Cardiac septum (tissue), 1 donor: ENCODE measurements at regions of chr6 and their contacts with region 1.

Region 1: GRCh38 chr6:119313937-119314884 is 35.4 kb downstream of the MAN1A1 start:
- DNase-seq: no peak

Region 2: GRCh38 chr6:118387764-118388701 is 926.2 kb before region 1 on chr6:
- intact Hi-C with region 1: no loop called
- DNase-seq: no peak

Region 3: DNA sequence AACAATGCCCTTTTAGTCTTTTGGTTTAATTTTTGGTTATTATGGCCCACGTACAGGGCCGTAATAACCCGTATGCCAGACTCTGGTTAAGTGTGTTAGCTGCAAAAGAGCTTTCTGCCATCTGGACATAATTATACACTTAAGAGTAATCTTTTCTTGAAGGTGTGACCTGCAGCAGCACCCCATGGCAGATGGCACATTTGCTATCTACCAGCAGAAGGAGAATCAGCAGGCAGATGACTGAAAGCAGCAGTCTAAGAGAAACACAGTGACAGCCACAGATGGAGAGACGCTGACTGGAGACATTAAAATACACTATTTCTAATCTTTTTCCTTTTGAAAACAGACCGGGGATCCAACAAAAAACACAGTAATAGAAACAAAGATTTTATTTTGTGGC is 401.6 kb before region 1 on chr6:
- intact Hi-C with region 1: no loop called
- DNase-seq: no peak

Region 4: GRCh38 chr6:119267126-119267905 is 46.9 kb before region 1 on chr6:
- intact Hi-C with region 1: no loop called
- DNase-seq: no peak

Region 5: DNA sequence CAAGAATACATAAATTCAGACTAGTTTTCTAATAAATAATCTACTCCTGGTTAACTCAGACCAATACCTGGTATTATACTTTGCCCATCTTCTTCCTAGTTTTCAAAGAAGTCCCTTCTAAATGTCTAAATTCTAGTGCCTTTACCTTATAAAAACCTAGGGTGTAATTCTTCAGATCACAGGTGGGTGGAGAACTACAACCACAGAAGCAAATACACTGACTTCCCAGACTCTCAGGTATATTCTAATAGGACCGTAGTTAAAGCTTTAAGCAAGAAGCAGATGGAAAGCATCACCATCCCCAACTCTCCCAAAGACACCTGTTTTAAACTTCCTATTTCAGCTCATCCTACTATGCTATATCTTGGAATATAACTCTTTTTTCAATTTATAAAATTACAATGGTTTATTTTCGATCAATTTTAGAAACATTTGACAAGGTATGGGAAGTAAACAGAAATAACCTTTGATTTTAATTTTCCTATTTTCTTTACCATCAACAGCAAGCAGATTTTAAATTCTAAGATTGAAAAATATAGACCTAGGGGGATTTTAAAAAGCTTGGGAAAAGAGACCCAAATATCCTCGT is 19.6 kb after region 1 on chr6:
- intact Hi-C with region 1: loop called (anchors 2 kb)
- DNase-seq: no peak

Region 6: DNA sequence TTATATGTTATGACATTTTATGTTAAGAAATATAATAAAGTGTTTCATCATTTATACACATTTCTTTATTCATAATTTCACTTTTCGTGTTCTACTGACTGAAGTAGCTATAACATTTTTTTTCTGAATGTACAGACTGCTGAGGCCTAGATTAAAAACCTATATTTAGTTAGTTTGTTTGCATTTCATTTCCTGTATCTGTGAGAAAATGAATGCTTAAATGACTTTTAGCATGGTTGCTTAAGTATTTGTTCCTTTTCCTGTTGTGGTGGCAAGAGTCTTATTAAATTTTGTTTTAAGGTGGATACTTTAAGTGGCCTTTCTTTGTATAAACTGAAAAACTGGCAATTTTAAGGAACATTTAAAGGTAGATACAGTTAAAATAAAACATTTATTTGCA is 815.0 kb after region 1 on chr6:
- intact Hi-C with region 1: loop called (anchors 5 kb)
- DNase-seq: no peak